Activated CD4-positive, alpha-beta memory T cell treated with anti-CD3 and anti-CD28 coated beads for 36 hours (primary cell): ENCODE measurements at regions of chr1 and their contacts with region 1.

Region 1: GRCh38 chr1:1059494-1060280 is 14.4 kb downstream of the RNF223 start:
- DNase-seq: peak; percentile 94
- H3K4me3 Mint-ChIP-seq: peak overlapping the region; percentile 83
- H3K27ac Mint-ChIP-seq: no peak overlapping the region
- H3K4me1 Mint-ChIP-seq: peaks cover 28% of the 10 kb centered on the region
- H3K27me3 Mint-ChIP-seq: peaks cover 28% of the 10 kb centered on the region

Region 2: DNA sequence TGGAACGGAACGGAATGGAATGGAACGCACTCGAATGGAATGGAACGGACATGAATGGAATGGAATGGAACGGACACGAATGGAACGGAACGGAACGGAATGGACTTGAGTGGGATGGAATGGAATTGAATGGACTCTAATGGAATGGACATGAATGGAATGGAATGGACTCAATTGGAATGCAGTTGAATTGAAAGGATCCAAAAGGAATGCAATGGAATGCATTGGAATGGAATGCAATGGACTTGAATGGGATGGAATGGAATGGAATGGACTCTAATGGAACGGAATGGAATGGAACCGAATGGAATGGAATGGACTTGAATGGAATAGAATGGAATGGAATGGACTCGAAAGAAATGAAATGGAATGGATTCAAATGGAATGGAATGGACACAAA is 270.9 kb before region 1 on chr1:
- CTCF ChIA-PET with region 1: no interaction called
- POLR2A ChIA-PET with region 1: no interaction called
- intact Hi-C with region 1: no loop called
- DNase-seq: no peak
- H3K4me3 Mint-ChIP-seq: no peak overlapping the region
- H3K27ac Mint-ChIP-seq: no peak overlapping the region
- H3K4me1 Mint-ChIP-seq: no peaks in the 10 kb centered on the region
- H3K27me3 Mint-ChIP-seq: no peaks in the 10 kb centered on the region

Region 3: GRCh38 chr1:983799-984473 is 75.8 kb before region 1 on chr1:
- CTCF ChIA-PET with region 1: interaction called, 55 read pairs
- POLR2A ChIA-PET with region 1: interaction called, 4 read pairs
- intact Hi-C with region 1: no loop called
- DNase-seq: peak; percentile 73
- H3K4me3 Mint-ChIP-seq: no peak overlapping the region
- H3K27ac Mint-ChIP-seq: no peak overlapping the region
- H3K4me1 Mint-ChIP-seq: peaks cover 5% of the 10 kb centered on the region
- H3K27me3 Mint-ChIP-seq: peaks cover 25% of the 10 kb centered on the region

Region 4: GRCh38 chr1:1033009-1033587 is 26.6 kb before region 1 on chr1:
- CTCF ChIA-PET with region 1: interaction called, 26 read pairs
- POLR2A ChIA-PET with region 1: interaction called, 11 read pairs
- intact Hi-C with region 1: loop called (anchors 1 kb)
- DNase-seq: peak; percentile 95
- H3K4me3 Mint-ChIP-seq: no peak overlapping the region
- H3K27ac Mint-ChIP-seq: no peak overlapping the region
- H3K4me1 Mint-ChIP-seq: peaks cover 7% of the 10 kb centered on the region
- H3K27me3 Mint-ChIP-seq: peaks cover 26% of the 10 kb centered on the region

Region 5: GRCh38 chr1:1098681-1099421 is 39.2 kb after region 1 on chr1:
- CTCF ChIA-PET with region 1: interaction called, 10 read pairs
- POLR2A ChIA-PET with region 1: interaction called, 4 read pairs
- intact Hi-C with region 1: loop called (anchors 2 kb)
- DNase-seq: peak; percentile 48
- H3K4me3 Mint-ChIP-seq: peak overlapping the region; percentile 9
- H3K27ac Mint-ChIP-seq: peak overlapping the region; percentile 97
- H3K4me1 Mint-ChIP-seq: peaks cover 47% of the 10 kb centered on the region
- H3K27me3 Mint-ChIP-seq: peaks cover 3% of the 10 kb centered on the region

Region 6: DNA sequence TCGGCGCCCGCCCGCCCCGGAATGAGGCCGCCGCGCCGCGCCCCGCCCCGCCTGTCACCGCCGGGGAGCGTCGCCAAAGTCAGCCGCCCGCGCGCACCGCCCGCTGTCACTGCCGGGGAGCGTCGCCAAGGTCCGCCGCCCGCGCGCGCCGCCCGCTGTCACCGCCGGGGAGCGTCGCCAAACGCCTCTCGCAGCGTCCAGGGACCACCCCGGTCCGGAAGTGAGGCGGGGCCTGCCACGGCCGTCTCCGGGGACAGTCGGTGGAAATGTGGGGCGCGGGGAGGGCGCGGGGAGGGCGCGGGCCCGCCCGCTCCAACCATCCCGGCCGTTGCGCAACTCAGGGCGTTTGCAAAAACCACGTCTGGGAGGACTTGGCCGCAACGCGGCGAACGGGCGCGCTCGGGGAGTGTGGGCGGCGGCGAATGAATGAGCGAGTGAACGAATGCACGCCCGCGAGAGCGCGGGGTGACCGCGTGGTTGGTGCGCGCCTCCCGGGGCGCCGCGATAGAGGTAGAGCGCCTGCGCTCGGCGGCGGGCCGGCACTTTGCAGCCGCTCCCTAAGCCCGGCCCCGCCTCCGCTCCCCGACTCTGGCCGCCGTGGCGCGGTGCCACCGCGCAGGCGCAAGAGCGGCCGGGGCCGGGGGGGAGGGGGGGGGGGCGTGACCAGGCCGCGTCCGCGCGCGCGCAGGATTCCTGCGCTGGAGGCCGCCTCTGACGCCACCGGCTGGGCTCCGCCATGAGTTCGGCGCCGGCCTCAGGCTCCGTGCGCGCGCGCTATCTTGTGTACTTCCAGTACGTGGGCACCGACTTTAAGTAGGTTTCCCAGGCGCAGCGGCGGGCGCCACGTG is 248.4 kb after region 1 on chr1 and contains the starts of genes ACAP3 and PUSL1:
- CTCF ChIA-PET with region 1: no interaction called
- POLR2A ChIA-PET with region 1: no interaction called
- intact Hi-C with region 1: no loop called
- DNase-seq: peak; percentile 91
- H3K4me3 Mint-ChIP-seq: peak within 1 kb of the TSS; percentile 81
- H3K27ac Mint-ChIP-seq: peak within 1 kb of the TSS; percentile 82
- H3K4me1 Mint-ChIP-seq: peaks cover 29% of the 10 kb centered on the region
- H3K27me3 Mint-ChIP-seq: no peaks in the 10 kb centered on the region
- total RNA-seq, gene ACAP3: 31.8 to 32.0 TPM
- total RNA-seq, gene PUSL1: 19.7 to 23.1 TPM

Region 7: GRCh38 chr1:2279210-2279639 is 1219.5 kb after region 1 on chr1:
- CTCF ChIA-PET with region 1: no interaction called
- POLR2A ChIA-PET with region 1: no interaction called
- intact Hi-C with region 1: no loop called
- DNase-seq: no peak
- H3K4me3 Mint-ChIP-seq: no peak overlapping the region
- H3K27ac Mint-ChIP-seq: peak overlapping the region; percentile 23
- H3K4me1 Mint-ChIP-seq: peaks cover 35% of the 10 kb centered on the region
- H3K27me3 Mint-ChIP-seq: no peaks in the 10 kb centered on the region